ENCODE measurements at regions of chr20 and their contacts with region 1.

Region 1: GRCh38 chr20:19995220-19995863 is 21.8 kb upstream of the NAA20 start:
- DNase-seq: peak in 4 of 9 experiments; percentile 18 to 63 (median 38)
- ATAC-seq: no peak
- H3K4me3 ChIP-seq: no peak overlapping the region
- H3K4me3 Mint-ChIP-seq: no peak overlapping the region
- H3K27ac ChIP-seq: no peak overlapping the region
- H3K27ac Mint-ChIP-seq: no peak overlapping the region
- H3K4me1 ChIP-seq: no peaks in the 10 kb centered on the region
- H3K4me1 Mint-ChIP-seq: no peaks in the 10 kb centered on the region
- H3K27me3 ChIP-seq: no peaks in the 10 kb centered on the region
- H3K27me3 Mint-ChIP-seq: peaks cover 19% of the 10 kb centered on the region
- CTCF ChIP-seq: peak; percentile 69

Region 2: DNA sequence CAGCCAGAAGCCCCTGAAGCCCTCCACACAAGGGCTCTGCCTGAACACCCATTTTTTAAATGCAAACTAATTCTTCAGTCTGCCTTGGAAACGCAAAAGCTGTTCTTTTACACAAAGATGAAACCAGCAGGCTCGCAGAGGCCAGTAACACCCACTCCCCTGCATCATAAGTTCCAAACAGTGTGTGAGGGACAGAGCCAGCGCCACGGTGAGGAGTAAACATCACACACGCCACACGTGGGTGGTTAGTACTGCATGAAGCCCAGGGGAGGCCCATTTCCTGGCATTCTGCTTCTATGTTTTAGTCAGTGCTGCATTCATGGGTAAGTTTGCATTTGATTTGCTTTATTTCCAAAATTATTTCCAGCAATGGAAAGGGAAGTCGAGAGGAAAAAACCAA is 454.9 kb before region 1 on chr20:
- CTCF ChIA-PET with region 1: no interaction called
- POLR2A ChIA-PET with region 1: no interaction called
- intact Hi-C with region 1: no loop called
- DNase-seq: no peak
- ATAC-seq: no peak
- H3K4me3 ChIP-seq: no peak overlapping the region
- H3K4me3 Mint-ChIP-seq: no peak overlapping the region
- H3K27ac ChIP-seq: no peak overlapping the region
- H3K27ac Mint-ChIP-seq: no peak overlapping the region
- H3K4me1 ChIP-seq: peaks cover 21% of the 10 kb centered on the region
- H3K4me1 Mint-ChIP-seq: peaks cover 22% of the 10 kb centered on the region
- H3K27me3 ChIP-seq: no peaks in the 10 kb centered on the region
- H3K27me3 Mint-ChIP-seq: no peaks in the 10 kb centered on the region
- CTCF ChIP-seq: no peak

Region 3: GRCh38 chr20:19784511-19785172 is 210.7 kb before region 1 on chr20:
- CTCF ChIA-PET with region 1: interaction called, 5 read pairs
- POLR2A ChIA-PET with region 1: no interaction called
- intact Hi-C with region 1: loop called in 1 of 2 experiments (anchors 5 kb)
- DNase-seq: peak in 2 of 9 experiments; percentile 18 to 32
- ATAC-seq: no peak
- H3K4me3 ChIP-seq: no peak overlapping the region
- H3K4me3 Mint-ChIP-seq: no peak overlapping the region
- H3K27ac ChIP-seq: no peak overlapping the region
- H3K27ac Mint-ChIP-seq: no peak overlapping the region
- H3K4me1 ChIP-seq: no peaks in the 10 kb centered on the region
- H3K4me1 Mint-ChIP-seq: no peaks in the 10 kb centered on the region
- H3K27me3 ChIP-seq: no peaks in the 10 kb centered on the region
- H3K27me3 Mint-ChIP-seq: peaks cover 10% of the 10 kb centered on the region
- CTCF ChIP-seq: no peak

Region 4: GRCh38 chr20:21862259-21862946 is 1867.1 kb after region 1 on chr20:
- CTCF ChIA-PET with region 1: no interaction called
- POLR2A ChIA-PET with region 1: no interaction called
- intact Hi-C with region 1: no loop called
- DNase-seq: no peak
- ATAC-seq: no peak
- H3K4me3 ChIP-seq: no peak overlapping the region
- H3K4me3 Mint-ChIP-seq: no peak overlapping the region
- H3K27ac ChIP-seq: no peak overlapping the region
- H3K27ac Mint-ChIP-seq: no peak overlapping the region
- H3K4me1 ChIP-seq: no peaks in the 10 kb centered on the region
- H3K4me1 Mint-ChIP-seq: no peaks in the 10 kb centered on the region
- H3K27me3 ChIP-seq: no peaks in the 10 kb centered on the region
- H3K27me3 Mint-ChIP-seq: no peaks in the 10 kb centered on the region
- CTCF ChIP-seq: no peak